Tibial artery (tissue), 4 donors: ENCODE measurements at regions of chr14 and their contacts with region 1.

Region 1: DNA sequence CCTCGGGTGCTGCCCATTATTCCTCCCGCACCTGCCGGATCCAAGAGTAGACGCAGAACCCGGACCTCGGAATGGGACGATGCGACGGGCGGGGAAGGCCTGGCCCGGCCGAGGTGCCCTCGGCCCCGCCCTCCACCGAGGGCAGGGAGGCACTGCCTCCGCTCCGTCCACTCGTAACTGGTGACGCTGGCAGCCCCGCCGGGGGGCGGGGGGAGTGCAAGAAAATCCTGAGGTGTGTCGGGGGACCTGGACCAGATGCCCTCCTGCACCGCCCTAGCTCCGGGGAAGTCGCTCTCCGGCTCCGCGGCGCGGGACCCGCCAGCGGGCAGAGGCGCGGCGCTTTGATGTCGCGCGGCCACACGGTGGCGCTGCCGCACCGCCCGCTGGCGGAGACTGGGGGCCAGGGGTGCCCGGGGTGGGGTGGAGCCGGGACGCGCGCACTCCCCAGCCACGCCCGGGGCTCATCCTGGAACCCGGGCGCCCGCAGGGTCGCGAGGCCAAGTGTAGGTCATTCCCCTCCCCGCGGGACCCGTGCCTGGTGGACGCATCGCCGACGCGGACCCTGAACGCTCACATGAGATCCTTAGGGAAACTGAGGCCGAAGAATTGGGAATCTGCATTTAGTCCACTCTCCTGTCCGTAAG is 202.8 kb downstream of the TTC8 start:
- DNase-seq: peak in 1 of 2 donors; percentile 71
- H3K4me3 ChIP-seq: peak overlapping the region; percentile 46 to 60
- H3K27ac ChIP-seq: no peak overlapping the region
- H3K4me1 ChIP-seq: peaks cover 0 to 14% (median 12%) of the 10 kb centered on the region in 4 donors
- H3K27me3 ChIP-seq: peaks cover 0 to 29% of the 10 kb centered on the region in 2 donors
- CTCF ChIP-seq: peak; percentile 89 to 90

Region 2: GRCh38 chr14:89848165-89848564 is 820.9 kb after region 1 on chr14:
- intact Hi-C with region 1: loop called (anchors 5 kb)
- DNase-seq: no peak
- H3K4me3 ChIP-seq: no peak overlapping the region
- H3K27ac ChIP-seq: no peak overlapping the region
- H3K4me1 ChIP-seq: peaks cover 0 to 23% (median 0%) of the 10 kb centered on the region in 4 donors
- H3K27me3 ChIP-seq: no peaks in the 10 kb centered on the region
- CTCF ChIP-seq: peak; percentile 54 to 67